Activated CD8-positive, alpha-beta T cell treated with anti-CD3 and anti-CD28 coated beads for 36 hours (primary cell): ENCODE measurements at regions of chr1 and their contacts with region 1.

Region 1: DNA sequence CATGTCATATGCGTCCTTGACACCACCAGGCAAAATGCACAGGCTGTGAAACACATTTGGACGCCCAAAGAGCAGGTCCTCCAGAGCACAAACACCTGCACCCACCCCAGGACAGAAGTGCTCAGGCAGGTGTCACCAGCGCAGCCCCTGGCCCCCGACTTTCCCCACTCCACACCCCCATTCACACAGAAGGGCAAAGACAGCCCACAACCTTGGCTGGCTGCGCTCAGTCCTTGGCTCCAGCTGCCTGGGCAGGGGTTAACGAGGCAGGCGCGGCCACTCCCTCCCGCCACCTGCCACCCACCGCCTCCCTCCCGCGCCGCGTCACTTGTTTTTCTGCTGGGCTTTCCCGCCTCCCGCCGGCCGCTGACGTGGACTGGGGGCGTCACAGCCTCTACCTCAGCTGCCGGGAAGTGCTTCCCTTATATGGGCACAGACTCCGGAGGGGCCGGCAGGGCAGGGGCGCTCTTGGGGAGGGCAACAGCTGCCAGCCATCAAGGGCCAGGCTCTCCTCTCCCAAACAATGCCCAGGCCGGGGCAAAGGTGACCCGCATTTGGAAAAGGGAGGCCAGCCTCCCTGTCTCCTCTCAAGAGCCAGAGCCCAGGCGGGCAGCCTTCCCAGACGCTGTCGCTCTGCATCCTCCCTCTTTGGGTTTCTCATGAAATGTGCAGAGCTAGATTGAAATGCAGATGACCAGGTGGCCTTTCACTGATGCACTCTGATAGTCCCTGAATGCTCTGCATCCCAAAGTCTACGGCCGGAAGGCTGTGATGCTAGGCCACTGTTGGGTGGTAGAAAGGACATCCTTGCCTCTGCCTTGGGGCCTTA is 14.8 kb upstream of the BTG2 start:
- DNase-seq: peak; percentile 99
- ATAC-seq: peak; percentile 55
- H3K4me3 Mint-ChIP-seq: peak overlapping the region; percentile 83
- H3K27ac Mint-ChIP-seq: peak overlapping the region; percentile 100
- H3K4me1 Mint-ChIP-seq: peaks cover 79% of the 10 kb centered on the region
- H3K27me3 Mint-ChIP-seq: peaks cover 1% of the 10 kb centered on the region
- CTCF ChIP-seq: no peak

Region 2: DNA sequence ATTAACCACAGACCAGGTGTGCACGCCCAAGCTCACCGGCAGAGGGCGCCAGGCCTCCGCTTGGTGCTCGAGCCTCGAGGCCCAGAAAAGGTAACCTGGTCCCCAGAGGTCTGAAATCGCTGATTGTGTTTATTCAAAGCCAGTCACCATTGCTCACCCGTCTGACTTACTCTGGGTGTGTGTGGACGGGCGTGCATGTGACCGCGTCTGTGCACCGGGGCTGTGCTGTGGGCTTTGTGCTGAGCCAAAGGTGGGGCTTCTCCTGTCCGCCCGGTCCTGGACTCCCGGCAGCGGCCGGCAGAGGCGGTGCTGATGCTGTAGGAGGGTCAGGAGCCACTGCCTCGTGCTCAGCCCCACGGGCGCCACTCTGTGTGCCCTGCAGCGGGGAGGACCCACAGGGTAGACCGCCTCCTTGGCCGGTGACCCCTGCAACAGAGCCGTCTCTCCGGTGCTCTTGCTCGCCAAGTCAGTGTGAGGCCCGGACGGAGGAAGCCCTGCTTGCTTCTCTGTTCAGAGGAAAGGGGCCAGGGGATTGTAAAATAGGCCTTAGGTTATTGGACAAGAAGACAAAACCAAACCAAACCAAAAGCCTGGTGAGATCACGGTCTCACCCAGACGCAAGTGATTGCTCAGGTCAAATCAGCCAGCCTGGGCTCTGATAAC is 17.1 kb before region 1 on chr1:
- CTCF ChIA-PET with region 1: interaction called, 303 read pairs
- POLR2A ChIA-PET with region 1: interaction called, 123 read pairs
- intact Hi-C with region 1: no loop called
- DNase-seq: peak; percentile 94
- ATAC-seq: peak; percentile 73
- H3K4me3 Mint-ChIP-seq: peak overlapping the region; percentile 77
- H3K27ac Mint-ChIP-seq: peak overlapping the region; percentile 83
- H3K4me1 Mint-ChIP-seq: peaks cover 57% of the 10 kb centered on the region
- H3K27me3 Mint-ChIP-seq: no peaks in the 10 kb centered on the region
- CTCF ChIP-seq: peak; percentile 93

Region 3: GRCh38 chr1:203769505-203770343 is 479.2 kb after region 1 on chr1:
- CTCF ChIA-PET with region 1: no interaction called
- POLR2A ChIA-PET with region 1: no interaction called
- intact Hi-C with region 1: no loop called
- DNase-seq: no peak
- ATAC-seq: no peak
- H3K4me3 Mint-ChIP-seq: no peak overlapping the region
- H3K27ac Mint-ChIP-seq: peak overlapping the region; percentile 49
- H3K4me1 Mint-ChIP-seq: peaks cover 26% of the 10 kb centered on the region
- H3K27me3 Mint-ChIP-seq: no peaks in the 10 kb centered on the region
- CTCF ChIP-seq: no peak

Region 4: GRCh38 chr1:203818399-203818798 is 527.9 kb after region 1 on chr1:
- CTCF ChIA-PET with region 1: no interaction called
- POLR2A ChIA-PET with region 1: no interaction called
- intact Hi-C with region 1: no loop called
- DNase-seq: no peak
- ATAC-seq: no peak
- H3K4me3 Mint-ChIP-seq: no peak overlapping the region
- H3K27ac Mint-ChIP-seq: no peak overlapping the region
- H3K4me1 Mint-ChIP-seq: peaks cover 25% of the 10 kb centered on the region
- H3K27me3 Mint-ChIP-seq: no peaks in the 10 kb centered on the region
- CTCF ChIP-seq: no peak